ENCODE measurements at regions of chr21 and their contacts with region 1.

Region 1: DNA sequence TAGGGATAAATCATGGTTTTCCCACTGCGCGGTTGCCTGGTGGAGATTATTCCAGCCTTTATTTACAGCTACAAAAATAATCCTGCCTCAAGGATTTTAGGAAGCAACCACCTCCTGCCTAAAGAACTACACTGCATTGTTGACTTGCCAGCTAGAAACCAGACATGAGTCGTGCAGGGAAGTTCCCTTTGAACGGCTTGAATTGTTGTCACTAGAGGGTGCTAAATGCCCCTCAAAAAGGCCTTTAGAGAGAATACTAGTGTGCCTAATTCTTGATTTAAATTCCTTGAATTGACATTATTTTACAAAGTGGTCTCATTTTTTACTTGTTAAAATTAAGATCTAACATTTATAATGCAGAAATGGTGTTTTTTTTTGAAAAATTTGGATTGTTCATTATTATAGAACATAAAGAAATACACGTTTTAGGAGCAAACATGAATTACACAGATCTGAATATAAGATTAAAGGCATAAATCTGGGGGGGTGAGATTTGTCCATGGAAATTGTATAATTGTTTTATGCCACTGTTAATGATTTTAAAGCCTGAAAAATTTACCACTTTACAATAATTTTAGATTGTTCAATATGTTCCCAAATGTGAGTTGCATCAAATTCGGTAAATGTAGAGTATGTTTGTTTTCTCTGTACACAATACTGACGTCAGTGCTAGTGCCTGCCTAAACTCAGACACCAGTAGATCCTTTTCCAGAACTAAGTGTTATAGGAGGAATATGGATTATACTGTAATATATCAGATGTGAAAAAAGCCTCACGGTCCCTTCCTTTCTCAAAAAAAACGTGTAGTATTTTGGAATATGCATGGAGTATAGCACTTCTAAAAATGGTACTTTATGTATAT is 7.6 kb upstream of the ERG start:
- DNase-seq: peak; percentile 46
- H3K4me3 ChIP-seq: no peak overlapping the region
- H3K27ac ChIP-seq: no peak overlapping the region
- H3K27me3 ChIP-seq: peaks cover 11% of the 10 kb centered on the region
- CTCF ChIP-seq: peak; percentile 79

Region 2: GRCh38 chr21:38544661-38545060 is 38.8 kb after region 1 on chr21:
- CTCF ChIA-PET with region 1: no interaction called
- POLR2A ChIA-PET with region 1: no interaction called
- DNase-seq: no peak
- H3K4me3 ChIP-seq: no peak overlapping the region
- H3K27ac ChIP-seq: no peak overlapping the region
- H3K27me3 ChIP-seq: peaks cover 3% of the 10 kb centered on the region
- CTCF ChIP-seq: no peak

Region 3: GRCh38 chr21:39176271-39176709 is 670.4 kb after region 1 on chr21:
- CTCF ChIA-PET with region 1: interaction called, 16 read pairs
- POLR2A ChIA-PET with region 1: no interaction called
- DNase-seq: no peak
- H3K4me3 ChIP-seq: no peak overlapping the region
- H3K27ac ChIP-seq: no peak overlapping the region
- H3K27me3 ChIP-seq: no peaks in the 10 kb centered on the region
- CTCF ChIP-seq: no peak

Measured in AG04450 (cell line).